Ovary (tissue), 10 donors: ENCODE measurements at regions of chr2 and their contacts with region 1.

Region 1: GRCh38 chr2:11697103-11697871 is 27.3 kb upstream of the NTSR2 start:
- DNase-seq: peak; percentile 54 to 81 (median 65)
- H3K4me3 ChIP-seq: no peak overlapping the region
- H3K27ac ChIP-seq: peak overlapping the region; percentile 80 to 90
- H3K4me1 ChIP-seq: peaks cover 17% of the 10 kb centered on the region
- H3K27me3 ChIP-seq: no peaks in the 10 kb centered on the region
- CTCF ChIP-seq: no peak
- EP300 ChIP-seq: no peak
- POLR2A ChIP-seq: no peak

Region 2: DNA sequence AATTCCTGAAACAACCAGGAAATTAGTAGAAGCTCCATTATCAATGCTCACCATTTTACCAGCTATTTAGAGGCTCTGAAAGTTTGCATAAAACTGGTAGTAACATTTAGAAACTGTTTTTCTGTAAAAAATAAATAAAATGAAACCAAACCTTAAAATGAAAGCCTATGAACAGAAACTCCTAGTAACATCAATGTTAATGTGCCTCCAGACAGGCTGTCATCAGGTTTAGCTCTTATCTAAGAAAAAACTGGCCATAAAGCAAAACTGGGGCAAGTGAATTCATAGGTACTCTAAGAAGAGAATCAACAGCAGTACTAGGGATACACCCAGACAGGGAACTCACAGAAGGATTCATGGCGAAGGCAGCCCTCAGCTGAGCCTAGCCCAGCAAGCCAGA is 239.4 kb before region 1 on chr2:
- intact Hi-C with region 1: no loop called
- DNase-seq: no peak
- H3K4me3 ChIP-seq: no peak overlapping the region
- H3K27ac ChIP-seq: no peak overlapping the region
- H3K4me1 ChIP-seq: peaks cover 9% of the 10 kb centered on the region
- H3K27me3 ChIP-seq: no peaks in the 10 kb centered on the region
- CTCF ChIP-seq: no peak
- EP300 ChIP-seq: no peak
- POLR2A ChIP-seq: no peak

Region 3: DNA sequence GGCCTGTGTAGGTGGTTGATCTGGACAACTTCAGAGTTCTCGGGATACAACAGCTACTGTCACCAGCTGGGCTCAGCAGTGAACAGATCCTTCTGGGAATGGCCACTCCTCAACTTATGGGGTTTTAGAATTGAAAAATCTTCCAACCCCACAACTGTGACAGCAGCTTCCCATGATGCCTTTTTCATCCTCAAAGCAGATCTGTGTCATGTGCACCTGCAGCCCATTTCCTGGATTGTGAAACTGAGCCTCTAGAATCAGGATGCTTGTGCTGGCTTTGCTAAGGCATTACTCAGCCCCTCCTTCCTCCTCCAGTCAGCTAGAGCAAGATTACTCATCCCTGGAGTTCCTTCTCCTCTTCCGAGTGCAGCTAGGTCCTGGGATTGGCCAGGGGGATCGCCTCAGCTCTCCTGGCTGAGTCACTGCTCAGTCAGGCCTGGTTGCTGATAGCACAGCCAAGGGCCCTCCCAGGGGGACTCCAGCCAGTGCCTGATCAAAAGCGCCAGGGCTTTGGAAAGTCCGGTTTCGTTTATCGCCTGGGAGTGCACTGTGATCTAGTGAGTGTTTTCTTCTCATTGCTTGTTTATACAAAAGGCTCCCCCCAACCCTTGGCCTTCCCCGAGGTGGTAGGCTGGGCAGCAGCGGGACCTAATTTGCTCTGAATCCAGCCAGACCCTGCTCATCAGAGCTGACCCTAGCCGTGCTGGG is 46.7 kb after region 1 on chr2:
- intact Hi-C with region 1: loop called in 3 of 4 experiments (anchors 5 kb)
- DNase-seq: peak; percentile 93 to 97 (median 94)
- H3K4me3 ChIP-seq: no peak overlapping the region
- H3K27ac ChIP-seq: peak overlapping the region; percentile 47 to 78
- H3K4me1 ChIP-seq: peaks cover 21% of the 10 kb centered on the region
- H3K27me3 ChIP-seq: no peaks in the 10 kb centered on the region
- CTCF ChIP-seq: no peak
- EP300 ChIP-seq: no peak
- POLR2A ChIP-seq: no peak